ENCODE measurements at regions of chr1 and their contacts with region 1.

Region 1: DNA sequence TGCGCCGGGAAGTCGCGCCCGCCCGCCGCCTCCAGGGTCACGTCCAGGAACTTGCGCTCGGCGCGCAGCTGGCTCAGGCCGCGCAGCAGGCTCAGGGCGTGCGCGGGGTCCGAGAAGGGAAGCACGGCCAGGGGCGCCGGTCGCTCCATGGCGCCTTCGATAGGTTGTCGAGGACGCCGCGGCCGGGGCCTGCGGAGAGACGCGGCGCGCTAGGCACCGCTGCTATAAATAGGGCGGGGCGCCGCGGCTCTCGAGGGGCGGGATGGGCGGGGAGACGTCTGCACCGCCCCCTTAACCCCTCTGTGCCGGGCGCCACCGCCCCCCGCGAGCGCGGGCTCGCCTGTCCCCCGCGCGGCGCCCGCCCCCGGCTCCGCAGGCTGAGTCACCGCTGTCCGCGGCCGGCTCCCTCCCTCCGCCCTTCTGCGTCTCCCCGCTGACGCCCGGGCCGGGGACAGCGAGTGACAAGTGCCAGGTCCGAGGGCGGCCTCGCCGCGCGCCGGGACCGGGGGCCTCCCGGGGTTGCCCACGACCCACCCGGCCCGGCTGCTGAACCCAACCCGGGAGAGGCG is at the start of gene KLHL21:
- DNase-seq: peak; percentile 88
- H3K4me3 Mint-ChIP-seq: peak within 1 kb of the TSS; percentile 86
- H3K27ac Mint-ChIP-seq: peak within 1 kb of the TSS; percentile 98
- H3K4me1 Mint-ChIP-seq: peaks cover 33% of the 10 kb centered on the region
- H3K27me3 Mint-ChIP-seq: no peaks in the 10 kb centered on the region
- total RNA-seq, gene KLHL21: 26.7 to 27.0 TPM

Region 2: DNA sequence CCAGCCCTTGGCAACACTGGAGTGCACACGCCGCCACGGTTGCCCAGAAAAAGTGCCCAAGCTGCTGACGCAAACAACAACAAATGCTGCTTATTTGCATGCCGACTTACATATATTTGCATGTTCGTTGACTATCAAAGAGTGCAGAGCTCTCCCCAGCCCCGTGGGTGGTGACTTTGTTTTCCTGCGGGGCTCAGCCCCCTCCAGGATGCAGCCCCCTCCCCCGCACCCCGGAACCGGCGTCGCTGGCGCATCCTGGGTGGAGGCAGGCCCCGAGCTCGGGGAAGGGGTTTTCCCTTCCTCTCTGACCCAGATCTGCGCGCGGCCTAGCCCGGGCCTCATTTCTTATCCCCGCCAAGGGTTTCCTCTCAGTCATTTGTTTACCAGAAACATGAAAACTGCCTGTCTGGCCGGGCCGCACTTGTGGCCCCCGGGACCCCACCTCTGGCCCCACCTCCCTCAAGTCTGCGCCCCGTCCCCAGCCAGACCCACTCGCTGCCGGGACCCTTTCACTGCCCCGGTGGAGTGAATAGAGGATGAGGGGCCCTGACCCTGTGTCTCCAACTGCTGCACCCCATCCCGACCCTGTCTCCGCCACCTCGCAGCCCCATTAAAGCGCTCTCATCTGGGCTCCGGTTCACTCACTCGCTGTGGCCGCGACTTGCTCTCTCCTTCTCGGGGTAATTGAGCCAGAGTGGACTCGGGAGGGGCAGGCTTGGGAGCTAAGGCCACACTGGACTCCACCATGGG is 142.3 kb before region 1 on chr1:
- CTCF ChIA-PET with region 1: no interaction called
- POLR2A ChIA-PET with region 1: interaction called, 10 read pairs
- DNase-seq: peak; percentile 90
- H3K4me3 Mint-ChIP-seq: peak overlapping the region; percentile 74
- H3K27ac Mint-ChIP-seq: peak overlapping the region; percentile 92
- H3K4me1 Mint-ChIP-seq: peaks cover 51% of the 10 kb centered on the region
- H3K27me3 Mint-ChIP-seq: peaks cover 19% of the 10 kb centered on the region

Region 3: GRCh38 chr1:6554031-6554906 is 48.5 kb before region 1 on chr1 and contains the start of gene NOL9:
- CTCF ChIA-PET with region 1: interaction called, 22 read pairs
- POLR2A ChIA-PET with region 1: interaction called, 52 read pairs
- DNase-seq: peak; percentile 96
- H3K4me3 Mint-ChIP-seq: peak within 1 kb of the TSS; percentile 75
- H3K27ac Mint-ChIP-seq: peak within 1 kb of the TSS; percentile 62
- H3K4me1 Mint-ChIP-seq: peaks cover 22% of the 10 kb centered on the region
- H3K27me3 Mint-ChIP-seq: no peaks in the 10 kb centered on the region
- total RNA-seq, gene NOL9: 39.1 to 40.8 TPM

Region 4: DNA sequence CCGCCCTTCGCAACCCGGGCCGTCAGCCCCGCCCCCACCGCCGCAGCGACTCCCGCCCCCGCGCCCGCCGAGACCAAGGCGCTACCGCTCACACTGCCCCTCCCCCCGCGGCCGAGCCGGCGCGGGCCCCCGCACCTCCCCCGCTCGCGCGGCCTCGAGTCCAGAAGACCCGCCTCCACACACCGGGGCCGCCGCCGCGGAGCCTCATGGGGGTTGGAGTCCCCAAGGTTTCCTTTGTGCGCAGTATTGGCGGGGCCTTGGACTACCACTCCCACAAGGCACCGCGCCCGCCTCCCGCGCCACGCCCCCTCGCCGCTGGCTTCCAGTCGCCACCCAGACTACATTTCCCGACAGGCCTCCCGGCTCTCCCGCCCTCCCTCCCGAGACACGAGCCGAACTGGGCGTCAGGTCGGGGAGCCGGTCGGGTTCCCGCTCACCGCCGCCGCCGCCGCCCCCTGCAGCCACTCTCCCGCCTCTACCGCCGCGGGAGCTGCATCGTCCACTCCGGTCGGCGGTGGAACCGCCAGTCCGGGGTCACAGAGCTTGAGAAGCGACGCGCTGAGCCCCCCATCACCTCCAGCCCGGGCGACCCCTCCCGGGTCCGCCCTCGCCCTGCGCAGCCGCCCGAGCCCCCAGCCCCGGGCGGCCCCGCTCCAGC is 10.7 kb after region 1 on chr1 and contains the start of gene PHF13:
- CTCF ChIA-PET with region 1: interaction called, 8 read pairs
- POLR2A ChIA-PET with region 1: interaction called, 58 read pairs
- DNase-seq: peak; percentile 100
- H3K4me3 Mint-ChIP-seq: peak within 1 kb of the TSS; percentile 84
- H3K27ac Mint-ChIP-seq: peak within 1 kb of the TSS; percentile 74
- H3K4me1 Mint-ChIP-seq: peaks cover 27% of the 10 kb centered on the region
- H3K27me3 Mint-ChIP-seq: no peaks in the 10 kb centered on the region
- total RNA-seq, gene PHF13: 15.4 to 17.2 TPM

Region 5: GRCh38 chr1:6784560-6785317 is 182.0 kb after region 1 on chr1:
- CTCF ChIA-PET with region 1: no interaction called
- POLR2A ChIA-PET with region 1: interaction called, 15 read pairs
- DNase-seq: peak; percentile 100
- H3K4me3 Mint-ChIP-seq: peak overlapping the region; percentile 89
- H3K27ac Mint-ChIP-seq: peak overlapping the region; percentile 84
- H3K4me1 Mint-ChIP-seq: peaks cover 42% of the 10 kb centered on the region
- H3K27me3 Mint-ChIP-seq: peaks cover 7% of the 10 kb centered on the region